Heart right ventricle (tissue), 16 donors: ENCODE measurements at regions of chr5 and their contacts with region 1.

Region 1: GRCh38 chr5:100577496-100577895 is 42.3 kb downstream of the FAM174A start:
- DNase-seq: no peak
- ATAC-seq: no peak
- H3K4me3 ChIP-seq: no peak overlapping the region
- H3K27ac ChIP-seq: peak overlapping the region in 5 of 10 donors; percentile 68 to 85 (median 71)
- H3K4me1 ChIP-seq: peaks cover 0 to 42% (median 17%) of the 10 kb centered on the region in 9 donors
- H3K27me3 ChIP-seq: no peaks in the 10 kb centered on the region
- CTCF ChIP-seq: no peak

Region 2: GRCh38 chr5:100595152-100595811 is 17.8 kb after region 1 on chr5:
- intact Hi-C with region 1: loop called in 1 of 10 experiments (anchors 1 kb)
- DNase-seq: peak in 1 of 2 donors; percentile 29
- ATAC-seq: peak; percentile 55 to 91 (median 82)
- H3K4me3 ChIP-seq: no peak overlapping the region
- H3K27ac ChIP-seq: peak overlapping the region in 5 of 10 donors; percentile 10 to 46 (median 27)
- H3K4me1 ChIP-seq: peaks cover 0 to 12% (median 0%) of the 10 kb centered on the region in 9 donors
- H3K27me3 ChIP-seq: no peaks in the 10 kb centered on the region
- CTCF ChIP-seq: no peak